ENCODE measurements at regions of chr11 and their contacts with region 1.

Region 1: DNA sequence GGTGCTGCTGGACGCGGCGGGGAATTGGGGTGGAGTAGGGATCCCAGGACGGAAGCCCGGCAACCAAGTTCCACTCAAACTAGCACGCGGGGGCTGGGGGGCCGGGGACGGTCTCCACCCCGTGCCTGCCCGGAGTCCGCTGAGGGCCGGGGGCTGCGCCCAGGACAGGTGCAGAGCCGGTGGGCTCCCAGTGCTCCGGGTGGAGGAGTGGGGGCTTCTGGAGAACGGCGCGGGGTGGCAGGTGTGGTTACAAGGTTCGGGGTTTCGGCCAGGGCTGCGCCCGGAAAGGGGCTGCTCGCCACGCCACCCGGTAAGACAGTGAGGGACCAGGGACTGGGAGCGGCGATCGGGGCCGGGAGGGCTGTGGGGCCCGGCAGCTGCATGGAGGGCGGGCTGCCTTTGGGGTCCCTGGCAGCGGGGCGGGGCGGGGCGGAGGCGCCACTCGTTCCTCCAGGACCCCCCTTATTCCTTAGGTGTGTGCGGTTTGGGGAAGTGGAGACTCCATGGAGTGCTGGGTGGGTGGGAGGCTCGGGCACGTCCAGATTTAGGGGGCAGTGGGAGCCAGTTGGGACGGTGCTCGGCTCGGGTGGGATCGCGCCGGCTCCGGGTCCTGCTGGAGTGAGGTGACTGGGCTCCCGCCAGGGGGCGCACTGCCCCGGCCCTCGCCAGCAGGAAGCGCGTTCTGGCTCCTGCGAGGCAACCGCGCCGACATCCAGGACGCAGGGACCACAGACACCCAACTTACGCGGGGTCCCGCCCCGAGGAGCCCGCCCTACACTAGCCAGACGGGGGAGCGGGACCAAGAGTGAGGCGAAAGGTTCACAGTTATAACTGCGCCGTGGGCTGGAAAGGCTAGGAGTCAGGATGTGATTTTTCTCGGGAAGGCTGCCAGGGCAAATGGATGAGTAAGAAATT is 868 bp downstream of the TSPAN18 start:
- DNase-seq: peak; percentile 60 to 92 (median 70)
- H3K4me3 ChIP-seq: peak overlapping the region; percentile 40 to 76 (median 61)
- H3K27ac ChIP-seq: peak overlapping the region in 6 of 59 donors; percentile 6 to 78 (median 50)
- H3K27me3 ChIP-seq: peaks cover 0 to 38% (median 6%) of the 10 kb centered on the region in 45 donors
- CTCF ChIP-seq: peak; percentile 66 to 99 (median 95)

Region 2: DNA sequence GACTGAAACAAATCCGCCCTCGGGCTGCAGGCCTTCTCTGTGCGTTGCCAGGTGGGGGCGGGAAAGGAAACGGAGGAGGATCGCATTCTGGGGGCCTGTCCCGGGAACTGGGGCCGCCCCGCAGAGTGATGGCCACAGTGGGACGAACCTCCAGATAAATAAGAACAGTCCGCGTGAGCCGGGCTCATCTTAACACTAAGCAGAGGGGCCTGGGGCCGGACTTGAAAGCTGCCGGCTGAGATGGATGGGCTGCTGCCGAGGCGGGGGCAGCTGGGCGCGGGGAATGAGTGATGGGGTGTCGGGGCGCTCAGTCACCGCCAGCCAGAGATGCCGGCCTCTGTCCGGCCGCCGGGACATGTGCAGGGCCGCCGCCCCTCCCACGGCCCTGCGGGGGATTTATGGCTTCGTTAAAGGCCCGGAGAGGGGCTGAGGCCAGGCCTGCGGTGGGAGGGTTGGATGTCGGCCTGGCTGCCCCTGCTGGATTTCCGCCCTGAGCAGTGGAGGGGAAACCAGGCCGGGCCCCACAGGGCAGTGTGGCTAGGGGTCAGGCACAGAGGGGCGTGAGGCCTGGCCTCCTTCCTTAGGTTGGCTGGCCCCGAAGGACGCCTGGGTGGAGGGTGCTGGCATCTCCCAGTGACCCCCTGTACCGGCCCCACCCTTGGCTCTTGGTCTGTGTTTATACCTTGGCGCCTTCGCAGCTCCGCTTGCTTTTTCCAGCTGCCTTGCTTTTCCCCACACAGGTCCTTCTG is 207.5 kb before region 1 on chr11:
- intact Hi-C with region 1: no loop called
- DNase-seq: no peak
- H3K4me3 ChIP-seq: no peak overlapping the region
- H3K27ac ChIP-seq: no peak overlapping the region
- H3K27me3 ChIP-seq: no peaks in the 10 kb centered on the region
- CTCF ChIP-seq: no peak

Region 3: GRCh38 chr11:44556735-44557409 is 170.8 kb before region 1 on chr11:
- intact Hi-C with region 1: loop called (anchors 5 kb)
- DNase-seq: peak in 8 of 10 donors; percentile 61 to 80 (median 69)
- H3K4me3 ChIP-seq: no peak overlapping the region
- H3K27ac ChIP-seq: peak overlapping the region in 23 of 59 donors; percentile 2 to 74 (median 40)
- H3K27me3 ChIP-seq: no peaks in the 10 kb centered on the region
- CTCF ChIP-seq: peak; percentile 40 to 95 (median 84)

Region 4: DNA sequence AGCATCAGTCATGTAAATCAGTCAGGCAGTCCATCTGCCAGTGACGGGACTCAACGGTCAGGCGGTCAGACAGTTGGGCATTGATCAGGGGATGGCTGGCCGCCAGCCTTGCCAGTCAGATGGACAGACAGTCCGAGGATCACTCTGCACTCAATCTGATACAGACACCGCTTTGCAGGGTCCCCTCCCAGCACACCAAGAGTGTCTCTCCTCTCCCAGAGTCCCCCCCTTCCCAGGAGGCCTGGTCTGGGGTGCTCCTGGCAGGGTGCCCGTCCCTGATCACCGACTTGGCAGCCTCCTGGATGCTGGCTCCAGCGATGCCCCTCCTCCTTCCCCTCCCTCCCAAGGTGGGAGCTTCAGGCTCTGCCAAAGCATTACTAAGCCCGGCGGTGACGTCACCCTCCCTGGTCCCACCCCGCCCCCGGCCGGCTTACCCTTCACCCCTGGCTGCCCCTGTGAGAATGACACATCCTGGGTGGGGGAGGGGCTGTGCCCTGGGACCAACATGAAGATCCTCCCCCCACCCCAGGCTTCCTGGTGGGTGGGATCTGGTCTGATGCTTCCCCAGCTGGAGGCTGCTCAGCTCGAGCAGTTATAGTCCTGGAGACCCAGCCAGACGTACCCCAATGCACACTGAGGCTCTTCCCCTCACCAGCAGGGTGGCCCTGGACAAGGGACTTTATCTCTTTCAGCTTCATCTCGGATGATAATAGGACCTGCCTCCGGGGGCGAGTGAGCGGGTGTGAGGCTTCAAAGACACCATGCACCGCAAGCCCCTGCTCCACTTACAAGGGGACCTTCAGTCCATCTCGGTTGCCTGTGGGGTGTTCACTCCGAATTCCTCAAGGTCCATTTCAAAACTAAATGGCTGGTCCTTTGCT is 93.0 kb before region 1 on chr11:
- intact Hi-C with region 1: loop called in 1 of 2 experiments (anchors 5 kb)
- DNase-seq: peak in 9 of 10 donors; percentile 78 to 93 (median 86)
- H3K4me3 ChIP-seq: peak overlapping the region in 42 of 59 donors; percentile 8 to 62 (median 33)
- H3K27ac ChIP-seq: peak overlapping the region in 37 of 59 donors; percentile 3 to 87 (median 55)
- H3K27me3 ChIP-seq: peaks cover 0 to 6% (median 0%) of the 10 kb centered on the region in 45 donors
- CTCF ChIP-seq: peak in 9 of 56 donors; percentile 7 to 27 (median 15)

Region 5: DNA sequence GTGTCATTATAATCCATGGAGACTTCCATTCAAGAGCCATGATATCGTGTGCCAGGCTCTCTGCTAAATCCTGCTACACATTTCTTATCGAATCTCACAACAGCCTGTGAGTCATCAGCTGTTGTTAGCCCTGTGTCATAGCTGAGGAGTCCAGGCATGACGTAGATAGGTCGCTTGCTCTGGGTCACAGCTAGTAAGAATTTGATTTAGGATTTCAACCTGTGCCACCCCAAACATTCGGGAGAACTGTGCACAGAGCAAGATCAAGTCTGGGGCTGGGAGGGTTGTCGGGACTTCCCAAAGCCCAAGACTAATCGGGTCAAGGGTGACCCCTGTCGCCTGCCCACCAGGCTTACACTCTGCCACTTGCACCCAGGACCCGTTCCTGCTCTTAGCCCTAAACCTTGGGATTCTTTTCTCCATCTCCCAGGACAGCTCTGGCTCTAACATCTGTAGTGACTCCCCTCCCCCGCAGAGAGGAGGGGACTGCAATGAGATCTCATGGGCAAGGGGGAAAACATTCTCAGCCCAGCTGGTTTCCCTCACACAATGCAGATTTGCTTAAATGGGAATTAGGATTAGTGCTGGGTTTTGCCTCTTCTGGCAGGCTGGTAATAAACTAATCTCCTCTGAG is 33.4 kb after region 1 on chr11:
- intact Hi-C with region 1: no loop called
- DNase-seq: no peak
- H3K4me3 ChIP-seq: no peak overlapping the region
- H3K27ac ChIP-seq: peak overlapping the region in 1 of 59 donors; percentile 16
- H3K27me3 ChIP-seq: peaks cover 0 to 5% (median 0%) of the 10 kb centered on the region in 45 donors
- CTCF ChIP-seq: no peak

Region 6: DNA sequence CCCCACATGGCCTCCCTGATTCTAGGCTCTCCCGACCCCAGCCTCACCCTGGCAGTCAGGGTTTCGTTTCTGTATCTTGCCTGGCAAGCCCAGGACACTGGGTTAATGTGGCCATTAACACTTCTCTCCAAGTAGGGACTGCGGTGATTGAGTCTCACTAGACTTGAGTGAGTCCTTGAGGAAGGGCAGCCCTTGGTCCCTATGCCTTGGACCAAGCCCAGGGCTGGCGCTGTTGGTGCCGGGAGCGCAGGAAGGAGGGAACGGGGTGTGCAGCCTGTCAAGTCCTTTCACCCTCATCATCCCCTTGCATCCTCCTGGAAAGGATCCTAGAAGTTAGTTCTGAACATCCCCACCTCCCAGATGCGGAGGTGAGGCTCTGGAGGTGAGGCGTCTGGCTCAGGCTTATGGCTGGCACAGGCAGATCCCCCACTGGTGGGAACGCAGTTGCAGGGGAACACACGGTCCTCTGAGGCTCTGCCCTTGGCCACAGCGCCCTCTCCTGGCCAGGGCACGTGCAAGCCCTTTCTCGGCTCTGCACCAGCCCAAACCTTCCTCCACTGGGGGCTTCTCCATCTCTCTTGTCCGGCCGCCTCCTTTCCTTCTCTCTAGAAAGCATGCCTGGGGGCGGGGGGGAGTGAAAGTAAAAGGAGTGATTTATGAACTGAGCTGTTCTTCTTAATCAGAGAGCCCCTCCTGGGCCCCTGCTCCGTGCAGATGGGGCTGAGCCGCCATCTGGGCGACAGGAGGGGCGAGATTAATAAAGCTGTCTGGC is 166.4 kb after region 1 on chr11:
- intact Hi-C with region 1: loop called (anchors 5 kb)
- DNase-seq: peak; percentile 51 to 82 (median 60)
- H3K4me3 ChIP-seq: peak overlapping the region in 32 of 59 donors; percentile 1 to 52 (median 25)
- H3K27ac ChIP-seq: peak overlapping the region in 16 of 59 donors; percentile 8 to 90 (median 40)
- H3K27me3 ChIP-seq: peaks cover 0 to 4% (median 0%) of the 10 kb centered on the region in 45 donors
- CTCF ChIP-seq: peak; percentile 28 to 92 (median 81)

Region 7: GRCh38 chr11:44911029-44911814 is 183.6 kb after region 1 on chr11:
- intact Hi-C with region 1: loop called (anchors 1 to 5 kb)
- DNase-seq: peak; percentile 50 to 97 (median 82)
- H3K4me3 ChIP-seq: peak overlapping the region in 27 of 59 donors; percentile 3 to 51 (median 27)
- H3K27ac ChIP-seq: peak overlapping the region in 4 of 59 donors; percentile 33 to 66 (median 52)
- H3K27me3 ChIP-seq: no peaks in the 10 kb centered on the region
- CTCF ChIP-seq: peak; percentile 86 to 98 (median 94)

Measured in dorsolateral prefrontal cortex (tissue), 120 donors.